Sciatic nerve (tissue), 2 donors: ENCODE measurements at regions of chr14 and their contacts with region 1.

Region 1: DNA sequence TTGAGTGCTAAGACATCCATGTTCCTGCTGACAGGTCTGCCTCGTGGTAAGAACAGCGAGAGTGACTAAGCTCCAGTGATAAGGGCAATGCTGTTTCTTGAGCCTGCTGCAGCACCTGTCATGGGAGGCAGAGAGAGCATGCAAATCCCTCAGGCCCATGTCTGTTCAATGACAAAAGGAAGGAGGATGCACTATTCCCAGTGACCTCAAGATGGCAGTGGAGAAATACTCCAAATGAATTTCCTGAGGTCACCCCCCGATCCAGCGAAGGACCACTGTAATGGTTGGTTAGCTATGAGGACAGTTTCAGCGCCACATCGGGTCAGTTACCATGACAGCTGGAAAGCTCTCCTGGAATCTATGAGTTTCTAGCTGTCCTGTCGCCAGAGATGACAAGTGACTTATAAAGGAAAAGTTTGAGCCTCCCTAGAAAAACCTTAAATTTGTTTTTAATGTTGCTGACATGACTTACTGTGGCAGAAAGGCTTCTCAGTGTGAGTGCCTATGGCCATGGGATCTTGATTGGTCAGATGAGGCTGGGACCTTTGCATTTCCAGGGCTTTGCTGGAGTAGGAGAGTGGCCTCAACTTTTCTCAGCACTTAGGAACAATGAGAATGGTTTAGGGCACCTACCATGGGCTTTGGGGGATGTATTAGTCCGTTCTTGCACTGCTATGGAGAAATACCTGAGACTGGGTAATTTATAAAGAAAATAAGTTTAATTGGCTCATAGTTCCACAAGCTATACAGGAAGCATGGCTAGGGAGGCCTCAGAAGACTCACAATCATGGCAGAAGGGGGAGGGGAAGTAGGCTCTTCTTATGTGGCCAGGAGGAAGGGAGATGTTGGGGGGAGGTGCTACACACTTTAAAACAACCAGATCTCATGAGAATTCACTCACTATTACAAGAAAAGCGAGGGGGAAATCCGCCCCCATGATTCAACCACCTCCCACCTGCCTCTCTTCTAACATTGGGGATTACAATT is 88.0 kb upstream of the TMEM260 start:
- DNase-seq: no peak
- ATAC-seq: peak; percentile 38

Region 2: GRCh38 chr14:57168138-57168679 is 676.6 kb after region 1 on chr14:
- intact Hi-C with region 1: no loop called
- DNase-seq: no peak
- ATAC-seq: no peak

Region 3: GRCh38 chr14:57317316-57317715 is 825.7 kb after region 1 on chr14:
- intact Hi-C with region 1: loop called (anchors 10 kb)
- DNase-seq: peak; percentile 81
- ATAC-seq: peak; percentile 59